Motor neuron (in vitro differentiated cells): ENCODE measurements at regions of chr17 and their contacts with region 1.

Region 1: DNA sequence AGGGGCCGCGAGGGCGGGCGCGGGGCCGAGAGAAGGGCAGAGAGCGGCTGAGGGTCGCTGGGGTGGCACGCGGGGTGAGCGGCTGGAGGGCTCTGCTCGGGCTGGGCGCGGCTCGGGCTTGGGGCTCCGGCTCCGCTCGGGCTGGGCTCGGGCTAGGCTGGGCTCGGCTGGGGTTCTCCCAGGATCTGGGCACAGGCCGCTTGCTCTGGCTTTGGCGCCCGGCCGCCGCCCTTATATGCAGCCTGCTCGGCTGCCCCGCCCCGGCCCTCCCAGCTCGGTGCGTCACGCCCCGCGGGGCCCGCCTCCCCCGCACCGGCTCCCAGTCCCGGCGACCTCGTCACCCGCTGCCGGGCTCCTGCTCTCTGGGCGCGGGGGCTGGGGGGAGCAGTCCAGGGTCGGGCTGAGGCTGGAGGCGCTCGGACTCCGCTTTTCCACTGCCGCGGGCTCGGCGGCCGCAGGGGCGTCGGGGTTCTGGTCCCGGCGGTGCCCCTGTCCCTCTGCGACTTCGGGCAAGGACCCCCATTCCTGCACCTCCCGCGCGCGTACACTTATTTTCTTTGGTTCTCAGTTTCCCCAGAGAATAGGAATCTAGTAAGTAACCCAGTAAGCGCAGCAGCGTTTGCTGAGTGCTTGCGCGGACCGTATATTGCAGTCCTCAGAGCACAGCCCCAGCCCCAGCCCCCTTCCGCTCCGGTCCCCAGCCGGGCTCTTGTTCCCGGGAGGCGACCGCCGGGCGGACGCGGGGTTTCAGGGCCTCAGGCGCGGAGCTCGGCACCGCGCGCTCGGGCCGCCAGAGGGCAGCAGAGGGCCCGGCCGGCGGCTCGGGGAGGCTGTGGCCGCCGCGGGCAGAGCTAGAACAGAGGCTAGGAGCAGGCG is at the start of gene RASD1:
- ATAC-seq: peak; percentile 80 to 89 (median 82)
- H3K4me3 ChIP-seq: peak within 1 kb of the TSS; percentile 38 to 55 (median 45)
- H3K27ac ChIP-seq: peak within 1 kb of the TSS; percentile 50 to 80
- H3K4me1 ChIP-seq: peaks cover 10 to 11% of the 10 kb centered on the region in 2 donors
- total RNA-seq, gene RASD1: 0.46 to 37.1 (median 6.7) TPM

Region 2: DNA sequence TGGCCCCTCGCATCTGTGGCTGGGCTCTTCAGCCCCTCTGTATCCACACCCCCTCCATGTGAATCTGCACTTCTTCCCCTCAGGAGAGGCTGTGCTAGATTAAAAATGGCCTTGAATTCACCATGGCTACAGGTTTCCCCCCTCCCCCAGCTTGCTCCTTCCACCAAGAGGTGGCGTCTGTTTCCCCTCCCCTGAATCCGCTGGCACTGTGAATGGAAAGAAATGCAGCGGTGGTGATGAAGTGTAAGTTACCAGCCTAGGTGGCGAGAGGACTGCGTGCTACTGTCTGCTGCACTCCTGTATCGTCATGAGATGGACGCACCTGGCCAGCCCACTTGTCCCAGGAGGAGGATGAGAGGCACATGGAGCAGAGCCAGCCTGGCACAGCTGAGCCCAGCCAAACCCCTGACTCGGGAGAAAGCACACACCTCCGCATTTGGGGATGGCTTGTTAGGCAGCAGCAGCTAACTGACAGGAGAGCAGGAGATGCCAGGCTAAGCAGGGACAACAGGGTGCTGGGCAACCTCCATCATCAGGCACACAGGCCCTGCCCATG is 550.7 kb before region 1 on chr17:
- in situ Hi-C with region 1: no loop called
- ATAC-seq: no peak
- H3K4me3 ChIP-seq: no peak overlapping the region
- H3K27ac ChIP-seq: no peak overlapping the region
- H3K4me1 ChIP-seq: no peaks in the 10 kb centered on the region

Region 3: DNA sequence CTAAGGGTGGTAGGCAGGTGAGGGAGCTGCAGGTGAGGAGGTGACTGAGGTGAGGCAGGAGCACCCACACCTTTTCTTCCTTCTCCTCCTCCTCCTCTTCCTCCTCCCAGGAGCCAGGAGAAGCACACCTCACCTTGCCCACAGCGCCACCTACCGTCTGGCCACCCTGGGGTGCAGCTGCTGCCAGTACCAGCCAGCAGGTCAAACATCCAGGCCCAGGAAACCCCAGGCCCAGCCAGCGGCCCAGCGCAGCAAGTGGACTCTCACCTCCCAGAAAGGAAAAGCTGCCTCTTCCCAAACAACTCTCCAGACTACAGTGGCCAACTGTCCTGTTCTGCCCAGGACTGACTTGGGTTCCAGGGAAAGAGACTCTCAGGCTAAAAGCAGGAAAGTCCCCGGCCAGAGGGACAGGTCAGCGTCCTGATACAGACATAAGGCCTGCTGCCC is 72.3 kb after region 1 on chr17:
- in situ Hi-C with region 1: loop called in 1 of 9 experiments (anchors 10 kb)
- ATAC-seq: peak in 6 of 8 experiments; percentile 44 to 84 (median 56)
- H3K4me3 ChIP-seq: no peak overlapping the region
- H3K27ac ChIP-seq: no peak overlapping the region
- H3K4me1 ChIP-seq: no peaks in the 10 kb centered on the region

Region 4: DNA sequence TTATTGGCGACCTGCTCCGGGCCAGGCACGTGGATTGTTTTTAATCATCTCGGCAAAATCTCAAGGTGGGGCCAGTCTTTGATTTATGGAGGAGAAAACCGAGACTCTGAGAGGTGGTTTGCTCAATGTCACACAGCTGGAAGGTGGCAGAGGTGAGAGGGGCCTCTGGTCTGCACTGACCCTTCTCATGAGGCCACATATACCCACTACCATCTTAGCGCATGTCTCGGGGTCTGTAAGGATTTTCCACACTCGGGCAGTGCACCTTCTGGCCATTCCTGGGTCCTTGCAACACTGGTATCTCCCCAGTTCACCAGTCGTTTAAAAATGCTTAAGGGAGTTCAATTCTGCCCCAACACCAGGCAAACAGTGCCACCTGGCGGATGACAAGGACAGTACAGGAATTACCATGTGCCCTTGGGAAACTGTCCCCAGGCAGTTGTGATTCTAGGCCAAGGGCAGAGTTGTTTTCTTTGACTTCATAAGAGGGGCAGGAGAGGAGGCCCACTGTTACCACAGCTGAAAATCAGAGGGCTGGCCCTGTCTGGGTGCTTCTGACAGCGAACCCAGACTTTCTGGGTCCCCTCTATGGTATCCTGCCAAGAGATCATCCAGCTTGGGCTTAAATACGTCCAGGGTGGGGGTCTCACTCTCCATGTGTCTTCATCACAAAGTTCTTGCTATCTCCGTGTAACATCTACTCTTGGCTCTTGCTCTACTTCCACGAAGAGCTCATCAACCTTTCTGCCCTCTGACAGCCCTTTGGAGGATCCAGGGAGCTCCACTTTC is 145.4 kb after region 1 on chr17:
- in situ Hi-C with region 1: loop called in 1 of 9 experiments (anchors 25 kb)
- ATAC-seq: peak; percentile 84 to 95 (median 92)
- H3K4me3 ChIP-seq: no peak overlapping the region
- H3K27ac ChIP-seq: no peak overlapping the region
- H3K4me1 ChIP-seq: peaks cover 0 to 2% of the 10 kb centered on the region in 2 donors